IMR-90 (cell line): ENCODE measurements at regions of chr4 and their contacts with region 1.

Region 1: GRCh38 chr4:118888666-118889311 is at the start of gene SYNPO2:
- DNase-seq: peak; percentile 87
- ATAC-seq: peak; percentile 95
- H3K4me3 ChIP-seq: peak within 1 kb of the TSS; percentile 52
- H3K27ac ChIP-seq: peak within 1 kb of the TSS; percentile 31; the same call in 1 of the 2 replicates
- H3K4me1 ChIP-seq: peaks cover 5% of the 10 kb centered on the region
- H3K27me3 ChIP-seq: no peaks in the 10 kb centered on the region
- CTCF ChIP-seq: no peak
- POLR2A ChIP-seq: peak; percentile 52; the same call in 1 of the 2 replicates
- RAD21 ChIP-seq: peak; percentile 29
- total RNA-seq, gene SYNPO2: 1.7 and 1.8 TPM in 2 replicates

Region 2: DNA sequence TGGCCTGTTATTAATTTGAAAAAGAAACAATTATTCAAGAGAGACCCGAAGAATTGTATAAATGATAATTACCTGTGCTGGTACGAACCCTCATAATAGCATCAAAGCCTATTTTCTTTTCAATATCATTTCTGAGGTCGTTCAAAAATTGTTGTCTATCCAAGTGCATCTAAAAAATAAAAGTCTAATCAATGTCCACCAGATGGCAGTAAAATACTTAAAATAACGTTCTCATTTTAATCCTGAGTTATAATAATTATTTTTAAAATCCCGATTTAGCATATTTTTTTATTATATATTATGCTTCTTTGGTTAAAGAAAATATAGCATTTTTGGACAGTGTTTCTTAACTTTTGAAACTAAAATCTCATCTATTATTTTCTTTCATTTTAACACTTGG is 147.9 kb before region 1 on chr4:
- CTCF ChIA-PET with region 1: no interaction called
- POLR2A ChIA-PET with region 1: no interaction called
- dilution Hi-C with region 1: no loop called
- in situ Hi-C with region 1: no loop called
- intact Hi-C with region 1: loop called (anchors 1 kb)
- DNase-seq: no peak
- ATAC-seq: no peak
- H3K4me3 ChIP-seq: no peak overlapping the region
- H3K27ac ChIP-seq: no peak overlapping the region
- H3K4me1 ChIP-seq: peaks cover 17% of the 10 kb centered on the region
- H3K27me3 ChIP-seq: no peaks in the 10 kb centered on the region
- CTCF ChIP-seq: peak; percentile 42
- POLR2A ChIP-seq: no peak
- RAD21 ChIP-seq: peak; percentile 24

Region 3: GRCh38 chr4:118772081-118772766 is 116.6 kb before region 1 on chr4:
- CTCF ChIA-PET with region 1: no interaction called
- POLR2A ChIA-PET with region 1: no interaction called
- dilution Hi-C with region 1: no loop called
- in situ Hi-C with region 1: loop called (anchors 10 kb)
- intact Hi-C with region 1: loop called (anchors 1 kb)
- DNase-seq: peak; percentile 70
- ATAC-seq: peak; percentile 60
- H3K4me3 ChIP-seq: no peak overlapping the region
- H3K27ac ChIP-seq: peak overlapping the region; percentile 50; the same call in 1 of the 2 replicates
- H3K4me1 ChIP-seq: peaks cover 12% of the 10 kb centered on the region
- H3K27me3 ChIP-seq: no peaks in the 10 kb centered on the region
- CTCF ChIP-seq: peak; percentile 61
- POLR2A ChIP-seq: no peak
- RAD21 ChIP-seq: peak; percentile 62

Region 4: DNA sequence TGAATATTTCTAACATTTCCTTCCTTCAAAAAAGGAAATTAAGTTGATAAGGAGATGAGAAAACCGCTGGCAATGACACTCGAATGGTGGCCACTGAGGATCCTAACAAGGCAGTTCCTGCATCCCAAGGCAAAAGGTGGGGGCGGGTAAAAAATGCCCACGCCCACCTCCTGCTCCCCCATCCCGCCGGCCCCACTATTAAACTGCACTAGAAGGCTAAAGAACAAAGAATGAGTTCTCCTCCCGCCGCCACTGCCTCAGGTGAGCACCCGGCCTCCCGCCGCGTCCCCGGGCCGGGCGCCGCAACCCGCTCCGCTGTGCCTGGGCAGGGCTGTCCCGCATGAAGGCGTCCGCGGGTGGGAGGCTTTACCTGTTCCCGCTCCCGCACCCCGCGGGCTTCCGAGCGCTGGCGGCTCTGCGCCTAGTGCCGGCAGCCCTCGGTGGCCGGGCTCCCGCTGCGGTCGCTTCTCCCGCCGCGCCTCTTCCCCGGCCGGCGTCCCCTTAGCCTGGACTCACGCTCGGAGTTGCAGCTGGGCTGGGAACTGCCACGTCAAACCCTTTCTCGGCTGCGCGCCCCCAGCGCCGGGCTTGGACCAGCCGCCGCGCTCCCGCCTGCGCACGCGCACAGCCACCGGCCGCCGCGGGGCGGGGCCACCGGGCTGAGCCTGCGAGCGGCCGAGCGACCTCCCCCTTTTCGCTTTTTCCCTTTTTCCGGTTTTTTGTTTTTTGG is 53.1 kb before region 1 on chr4 and contains the start of gene SEC24D:
- CTCF ChIA-PET with region 1: no interaction called
- POLR2A ChIA-PET with region 1: no interaction called
- dilution Hi-C with region 1: no loop called
- in situ Hi-C with region 1: no loop called
- intact Hi-C with region 1: loop called (anchors 2 kb)
- DNase-seq: peak; percentile 87
- ATAC-seq: peak; percentile 90
- H3K4me3 ChIP-seq: peak within 1 kb of the TSS; percentile 93
- H3K27ac ChIP-seq: peak within 1 kb of the TSS; percentile 99
- H3K4me1 ChIP-seq: peaks cover 5% of the 10 kb centered on the region
- H3K27me3 ChIP-seq: no peaks in the 10 kb centered on the region
- CTCF ChIP-seq: 0 out of 2 replicates have a peak, but pooled peaks have one; percentile 12
- POLR2A ChIP-seq: peak; percentile 92
- RAD21 ChIP-seq: no peak
- total RNA-seq, gene SEC24D: 93.2 and 98.9 TPM in 2 replicates

Region 5: GRCh38 chr4:118981839-118982381 is 93.1 kb after region 1 on chr4:
- CTCF ChIA-PET with region 1: no interaction called
- POLR2A ChIA-PET with region 1: no interaction called
- dilution Hi-C with region 1: no loop called
- in situ Hi-C with region 1: no loop called
- intact Hi-C with region 1: no loop called
- DNase-seq: peak; percentile 96
- ATAC-seq: peak; percentile 89
- H3K4me3 ChIP-seq: no peak overlapping the region
- H3K27ac ChIP-seq: peak overlapping the region; percentile 21; the same call in 1 of the 2 replicates
- H3K4me1 ChIP-seq: peaks cover 18% of the 10 kb centered on the region
- H3K27me3 ChIP-seq: no peaks in the 10 kb centered on the region
- CTCF ChIP-seq: peak; percentile 92
- POLR2A ChIP-seq: no peak
- RAD21 ChIP-seq: peak; percentile 98

Region 6: GRCh38 chr4:119151161-119151560 is 262.4 kb after region 1 on chr4:
- CTCF ChIA-PET with region 1: no interaction called
- POLR2A ChIA-PET with region 1: no interaction called
- dilution Hi-C with region 1: no loop called
- in situ Hi-C with region 1: no loop called
- intact Hi-C with region 1: no loop called
- DNase-seq: no peak
- ATAC-seq: no peak
- H3K4me3 ChIP-seq: no peak overlapping the region
- H3K27ac ChIP-seq: no peak overlapping the region
- H3K4me1 ChIP-seq: no peaks in the 10 kb centered on the region
- H3K27me3 ChIP-seq: no peaks in the 10 kb centered on the region
- CTCF ChIP-seq: no peak
- POLR2A ChIP-seq: no peak
- RAD21 ChIP-seq: no peak

Region 7: GRCh38 chr4:119615068-119615719 is 726.4 kb after region 1 on chr4:
- CTCF ChIA-PET with region 1: no interaction called
- POLR2A ChIA-PET with region 1: no interaction called
- dilution Hi-C with region 1: no loop called
- in situ Hi-C with region 1: no loop called
- intact Hi-C with region 1: no loop called
- DNase-seq: no peak
- ATAC-seq: peak; percentile 18
- H3K4me3 ChIP-seq: no peak overlapping the region
- H3K27ac ChIP-seq: 0 out of 2 replicates have a peak overlapping the region, but pooled peaks have one; percentile 41
- H3K4me1 ChIP-seq: peaks cover 16% of the 10 kb centered on the region
- H3K27me3 ChIP-seq: no peaks in the 10 kb centered on the region
- CTCF ChIP-seq: no peak
- POLR2A ChIP-seq: no peak
- RAD21 ChIP-seq: no peak